PC-9 (cell line): ENCODE measurements at regions of chr11 and their contacts with region 1.

Region 1: GRCh38 chr11:96389720-96390487 is at the starts of genes CCDC82 and JRKL:
- DNase-seq: peak; percentile 92 to 98
- H3K4me3 ChIP-seq: peak within 1 kb of the TSS; percentile 75
- H3K27ac ChIP-seq: peak within 1 kb of the TSS; percentile 58
- H3K4me1 ChIP-seq: peaks cover 27% of the 10 kb centered on the region
- H3K27me3 ChIP-seq: no peaks in the 10 kb centered on the region
- CTCF ChIP-seq: no peak
- total RNA-seq, gene CCDC82: 18.6 and 19.9 TPM in 2 replicates
- total RNA-seq, gene JRKL: 12.4 and 13.5 TPM in 2 replicates

Region 2: GRCh38 chr11:95835768-95836488 is 554.0 kb before region 1 on chr11:
- CTCF ChIA-PET with region 1: interaction called, 11 read pairs
- POLR2A ChIA-PET with region 1: interaction called, 9 read pairs
- intact Hi-C with region 1: loop called (anchors 1 kb)
- DNase-seq: peak; percentile 76 to 89
- H3K4me3 ChIP-seq: no peak overlapping the region
- H3K27ac ChIP-seq: peak overlapping the region; percentile 38
- H3K4me1 ChIP-seq: no peaks in the 10 kb centered on the region
- H3K27me3 ChIP-seq: no peaks in the 10 kb centered on the region
- CTCF ChIP-seq: peak; percentile 97

Region 3: GRCh38 chr11:96012086-96012824 is 377.6 kb before region 1 on chr11:
- CTCF ChIA-PET with region 1: no interaction called
- POLR2A ChIA-PET with region 1: no interaction called
- intact Hi-C with region 1: loop called (anchors 2 kb)
- DNase-seq: peak; percentile 53 to 65
- H3K4me3 ChIP-seq: no peak overlapping the region
- H3K27ac ChIP-seq: no peak overlapping the region
- H3K4me1 ChIP-seq: peaks cover 24% of the 10 kb centered on the region
- H3K27me3 ChIP-seq: no peaks in the 10 kb centered on the region
- CTCF ChIP-seq: peak; percentile 21; the same call in 1 of the 2 replicates

Region 4: DNA sequence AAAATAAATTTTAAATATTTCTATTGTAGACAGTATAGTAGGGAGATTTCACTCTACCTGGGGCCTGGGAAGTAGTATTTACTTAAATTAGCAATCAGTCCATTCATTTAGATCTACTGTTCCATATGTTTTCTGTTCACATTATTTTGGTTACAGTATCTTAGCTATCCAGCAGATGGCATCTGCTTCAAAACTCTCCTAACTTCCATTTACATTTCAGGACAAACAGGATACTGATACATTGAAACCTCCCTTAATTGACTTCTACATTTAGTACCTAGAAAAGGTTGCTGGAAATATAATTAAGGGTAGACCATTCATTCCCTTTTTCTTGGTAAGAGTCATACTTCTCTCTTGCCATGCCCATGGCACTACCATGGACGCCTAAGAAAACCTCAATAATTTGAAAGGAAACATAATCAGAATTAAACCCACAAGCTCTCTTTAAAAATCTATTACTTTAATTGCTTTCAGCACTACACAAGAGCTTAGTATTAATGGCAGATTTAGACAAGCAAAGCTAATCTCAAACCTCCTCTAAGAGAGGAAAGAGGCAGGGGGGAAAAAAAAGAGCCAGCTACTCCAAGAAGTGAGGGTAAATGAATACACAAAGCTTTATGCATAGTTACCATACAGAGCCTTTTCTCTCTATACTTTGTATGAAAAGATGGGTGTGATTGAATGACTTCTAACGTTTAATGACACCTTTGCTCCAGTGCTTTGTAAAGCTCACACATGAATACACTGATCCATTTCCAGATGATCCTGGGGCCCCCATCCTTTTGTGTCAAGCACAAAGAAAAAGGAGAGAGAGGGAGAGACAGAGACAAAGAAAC is 334.8 kb before region 1 on chr11:
- CTCF ChIA-PET with region 1: interaction called, 8 read pairs
- POLR2A ChIA-PET with region 1: no interaction called
- intact Hi-C with region 1: loop called (anchors 5 kb)
- DNase-seq: peak in 1 of 2 experiments; percentile 50
- H3K4me3 ChIP-seq: no peak overlapping the region
- H3K27ac ChIP-seq: peak overlapping the region; percentile 47
- H3K4me1 ChIP-seq: peaks cover 64% of the 10 kb centered on the region
- H3K27me3 ChIP-seq: no peaks in the 10 kb centered on the region
- CTCF ChIP-seq: peak; percentile 79

Region 5: DNA sequence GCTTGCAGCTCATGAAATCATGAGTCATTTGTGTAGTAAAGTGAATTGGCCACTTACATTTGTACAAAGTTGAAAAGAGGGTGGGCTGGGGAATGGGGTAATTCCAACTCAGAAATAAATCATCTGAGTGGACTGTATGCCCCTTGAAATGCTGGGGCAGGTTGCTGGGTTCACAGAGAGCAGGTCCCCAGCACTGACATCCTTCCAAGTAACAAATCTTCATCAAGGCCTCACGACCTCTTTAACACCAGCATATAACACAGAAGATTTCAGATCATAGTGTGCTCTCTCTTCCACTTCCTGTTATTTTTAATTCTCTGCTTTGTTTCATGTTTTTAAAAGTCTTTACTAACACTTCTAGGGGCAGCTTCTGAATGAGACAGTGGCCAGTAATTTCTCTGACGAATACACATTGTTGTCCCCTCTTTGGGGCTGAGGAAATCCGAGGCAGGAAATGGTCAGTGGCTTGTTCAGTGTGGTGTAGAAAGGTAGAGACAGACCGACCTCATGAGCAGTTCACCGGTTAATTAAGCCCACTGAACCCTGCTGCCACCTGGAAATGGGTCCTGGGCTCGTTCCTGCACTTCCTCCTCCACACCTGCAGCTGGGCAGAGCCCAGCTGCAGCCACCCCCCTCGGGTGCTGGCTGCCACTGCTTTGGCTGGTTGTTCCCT is 174.7 kb before region 1 on chr11:
- CTCF ChIA-PET with region 1: no interaction called
- POLR2A ChIA-PET with region 1: no interaction called
- intact Hi-C with region 1: no loop called
- DNase-seq: no peak
- H3K4me3 ChIP-seq: no peak overlapping the region
- H3K27ac ChIP-seq: peak overlapping the region; percentile 38
- H3K4me1 ChIP-seq: peaks cover 42% of the 10 kb centered on the region
- H3K27me3 ChIP-seq: no peaks in the 10 kb centered on the region
- CTCF ChIP-seq: no peak

Region 6: GRCh38 chr11:96228473-96228891 is 161.4 kb before region 1 on chr11:
- CTCF ChIA-PET with region 1: no interaction called
- POLR2A ChIA-PET with region 1: no interaction called
- intact Hi-C with region 1: loop called (anchors 5 kb)
- DNase-seq: peak; percentile 63 to 83
- H3K4me3 ChIP-seq: no peak overlapping the region
- H3K27ac ChIP-seq: peak overlapping the region; percentile 48
- H3K4me1 ChIP-seq: peaks cover 30% of the 10 kb centered on the region
- H3K27me3 ChIP-seq: no peaks in the 10 kb centered on the region
- CTCF ChIP-seq: no peak

Region 7: GRCh38 chr11:96263361-96263763 is 126.5 kb before region 1 on chr11:
- CTCF ChIA-PET with region 1: no interaction called
- POLR2A ChIA-PET with region 1: interaction called, 10 read pairs
- intact Hi-C with region 1: no loop called
- DNase-seq: peak in 1 of 2 experiments; percentile 97
- H3K4me3 ChIP-seq: peak overlapping the region; percentile 17; the same call in 1 of the 2 replicates
- H3K27ac ChIP-seq: peak overlapping the region; percentile 77
- H3K4me1 ChIP-seq: peaks cover 82% of the 10 kb centered on the region
- H3K27me3 ChIP-seq: no peaks in the 10 kb centered on the region
- CTCF ChIP-seq: no peak

Region 8: DNA sequence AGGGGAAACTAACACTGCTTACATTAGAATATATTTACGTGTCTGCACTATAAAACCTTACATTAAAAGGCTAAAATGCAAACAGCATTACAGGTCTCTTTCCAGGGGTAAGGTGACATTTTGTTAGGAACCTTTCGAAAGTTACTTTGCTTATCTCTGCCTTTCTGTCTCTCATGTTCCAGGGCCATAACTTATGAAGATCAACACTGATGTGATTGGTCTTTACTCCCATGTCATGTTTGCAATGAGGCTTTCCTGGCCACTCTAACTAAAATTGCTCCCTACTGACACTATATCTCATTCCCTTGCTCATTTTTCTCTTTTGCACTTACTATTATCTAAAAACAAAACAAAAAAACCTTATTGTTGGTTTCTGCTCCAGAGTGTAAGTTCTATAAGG is 119.0 kb after region 1 on chr11:
- CTCF ChIA-PET with region 1: no interaction called
- POLR2A ChIA-PET with region 1: no interaction called
- intact Hi-C with region 1: no loop called
- DNase-seq: no peak
- H3K4me3 ChIP-seq: no peak overlapping the region
- H3K27ac ChIP-seq: no peak overlapping the region
- H3K4me1 ChIP-seq: no peaks in the 10 kb centered on the region
- H3K27me3 ChIP-seq: peaks cover 18% of the 10 kb centered on the region; the same call in 1 of the 2 replicates
- CTCF ChIP-seq: no peak